ENCODE measurements at regions of chr14 and their contacts with region 1.

Region 1: DNA sequence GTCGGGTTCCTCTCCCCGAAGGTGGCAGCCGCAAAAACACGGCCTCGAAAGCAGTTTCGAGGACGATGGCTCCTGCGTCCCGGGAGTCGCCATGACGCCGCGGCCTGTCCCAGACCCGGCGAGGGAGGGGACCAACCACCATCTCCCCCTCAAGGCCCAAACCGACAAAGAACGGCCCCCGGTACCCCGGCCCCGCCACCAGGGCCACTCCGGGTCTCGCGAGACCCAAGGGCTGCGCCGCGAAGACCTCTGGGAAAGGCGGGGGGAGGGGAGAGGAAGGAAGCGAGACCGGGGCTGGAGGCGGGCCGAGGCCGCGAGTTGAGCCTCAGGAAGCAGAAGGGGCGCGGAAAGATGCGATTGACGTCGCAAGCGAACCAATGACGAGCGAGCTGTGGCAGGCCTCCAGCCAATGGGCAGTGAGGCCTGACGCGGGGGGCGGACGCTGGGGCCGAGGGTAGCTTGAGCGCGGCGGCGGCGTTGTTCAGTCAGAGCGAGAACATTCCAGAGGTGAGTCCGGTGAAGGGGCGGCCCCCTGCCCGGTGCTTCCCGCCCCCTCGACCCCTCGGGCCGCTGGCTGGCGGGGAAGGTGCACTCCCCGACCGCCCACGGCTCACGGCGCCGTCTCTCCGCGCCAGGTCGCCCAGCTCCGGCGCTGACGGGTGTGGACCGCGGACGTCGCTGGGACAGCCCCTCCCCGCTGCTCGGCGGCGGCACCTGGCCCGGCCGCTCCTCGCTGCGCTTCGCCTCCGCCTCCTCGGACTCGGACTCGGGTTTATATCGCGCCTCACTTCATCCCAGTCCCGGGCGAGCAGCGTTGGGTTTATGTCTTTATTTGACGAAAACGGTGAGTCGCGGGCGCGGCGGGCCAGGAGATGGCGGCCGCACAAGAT is at the start of gene EIF5:
- DNase-seq: peak; percentile 92 to 99 (median 99)
- ATAC-seq: peak; percentile 91
- H3K4me3 ChIP-seq: peak within 1 kb of the TSS; percentile 81
- H3K4me3 Mint-ChIP-seq: peak within 1 kb of the TSS; percentile 92 to 97 (median 96)
- H3K27ac ChIP-seq: peak within 1 kb of the TSS; percentile 99
- H3K27ac Mint-ChIP-seq: peak within 1 kb of the TSS; percentile 94 to 99 (median 98)
- H3K4me1 ChIP-seq: peaks cover 22 to 29% of the 10 kb centered on the region in 2 donors
- H3K4me1 Mint-ChIP-seq: peaks cover 23 to 61% (median 50%) of the 10 kb centered on the region in 7 donors
- H3K27me3 ChIP-seq: no peaks in the 10 kb centered on the region
- H3K27me3 Mint-ChIP-seq: peaks cover 0 to 4% (median 0%) of the 10 kb centered on the region in 5 donors
- total RNA-seq, gene EIF5: 182 to 716 (median 322) TPM

Region 2: GRCh38 chr14:102362545-102363181 is 971.3 kb before region 1 on chr14 and contains the starts of genes CINP and TECPR2:
- CTCF ChIA-PET with region 1: no interaction called
- POLR2A ChIA-PET with region 1: no interaction called
- intact Hi-C with region 1: loop called (anchors 1 to 5 kb)
- DNase-seq: peak; percentile 88 to 95 (median 92)
- ATAC-seq: peak; percentile 97
- H3K4me3 ChIP-seq: peak within 1 kb of the TSS; percentile 96
- H3K4me3 Mint-ChIP-seq: peak within 1 kb of the TSS in 6 of 10 donors; percentile 92 to 97 (median 95)
- H3K27ac ChIP-seq: peak within 1 kb of the TSS; percentile 87
- H3K27ac Mint-ChIP-seq: peak within 1 kb of the TSS; percentile 82 to 99 (median 96)
- H3K4me1 ChIP-seq: peaks cover 6 to 15% of the 10 kb centered on the region in 2 donors
- H3K4me1 Mint-ChIP-seq: peaks cover 17 to 42% (median 36%) of the 10 kb centered on the region in 7 donors
- H3K27me3 ChIP-seq: no peaks in the 10 kb centered on the region
- H3K27me3 Mint-ChIP-seq: no peaks in the 10 kb centered on the region
- total RNA-seq, gene CINP: 16.8 to 34.4 (median 31.8) TPM
- total RNA-seq, gene TECPR2: 8.7 to 12.9 (median 11.4) TPM

Region 3: GRCh38 chr14:103207388-103208072 is 126.5 kb before region 1 on chr14:
- CTCF ChIA-PET with region 1: no interaction called
- POLR2A ChIA-PET with region 1: no interaction called
- intact Hi-C with region 1: no loop called
- DNase-seq: no peak
- ATAC-seq: no peak
- H3K4me3 ChIP-seq: no peak overlapping the region
- H3K4me3 Mint-ChIP-seq: peak overlapping the region in 2 of 10 donors; percentile 17 to 57
- H3K27ac ChIP-seq: no peak overlapping the region
- H3K27ac Mint-ChIP-seq: no peak overlapping the region
- H3K4me1 ChIP-seq: no peaks in the 10 kb centered on the region
- H3K4me1 Mint-ChIP-seq: peaks cover 0 to 6% (median 0%) of the 10 kb centered on the region in 7 donors
- H3K27me3 ChIP-seq: no peaks in the 10 kb centered on the region
- H3K27me3 Mint-ChIP-seq: peaks cover 34 to 58% (median 45%) of the 10 kb centered on the region in 5 donors

Region 4: DNA sequence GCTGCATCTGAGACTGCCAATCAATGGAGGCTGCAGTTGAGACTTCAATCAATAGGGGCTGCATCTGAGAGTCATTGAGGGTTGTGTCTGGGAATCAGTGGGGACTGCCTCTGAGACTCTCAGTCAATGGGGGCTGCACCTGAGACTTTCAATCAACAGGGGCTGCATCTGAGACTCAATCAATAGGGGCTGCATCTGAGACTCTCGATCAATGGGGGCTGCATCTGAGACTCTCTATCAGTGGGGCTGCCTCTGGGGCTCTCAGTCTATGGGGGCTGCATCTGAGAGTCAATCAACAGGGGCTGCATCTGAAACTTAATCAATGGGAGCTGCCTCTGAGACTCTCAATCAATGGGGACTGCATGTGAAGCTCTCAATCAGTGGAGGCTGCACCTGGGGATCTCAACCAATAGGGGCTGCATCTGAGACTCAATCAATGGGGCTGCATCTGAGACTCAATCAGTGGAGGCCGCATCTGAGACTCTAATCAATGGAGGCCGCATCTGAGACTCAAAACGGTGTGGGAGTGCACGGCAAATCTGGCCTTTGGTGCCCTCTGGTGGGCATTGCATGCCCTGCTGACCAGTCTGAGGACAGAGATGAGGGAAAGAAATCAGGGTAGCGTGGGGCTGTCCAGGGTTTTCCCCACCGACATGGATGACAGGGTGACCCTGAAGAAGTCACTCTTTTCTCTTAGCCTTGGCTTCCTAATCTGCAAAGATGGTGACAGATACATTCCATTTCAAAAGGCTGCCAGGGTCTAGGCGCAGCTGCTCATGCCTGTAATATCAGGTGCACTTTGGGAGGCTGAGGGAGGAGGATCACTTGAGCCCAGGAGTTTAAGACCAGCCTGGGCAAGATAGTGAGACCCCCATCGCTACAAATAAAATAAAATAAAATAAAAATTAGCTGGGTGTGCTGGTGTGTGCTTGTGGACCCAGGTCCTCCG is 41.3 kb before region 1 on chr14:
- CTCF ChIA-PET with region 1: no interaction called
- POLR2A ChIA-PET with region 1: interaction called, 4 read pairs
- intact Hi-C with region 1: loop called in 1 of 2 experiments (anchors 1 kb)
- DNase-seq: peak; percentile 34 to 77 (median 56)
- ATAC-seq: peak; percentile 92
- H3K4me3 ChIP-seq: no peak overlapping the region
- H3K4me3 Mint-ChIP-seq: no peak overlapping the region
- H3K27ac ChIP-seq: no peak overlapping the region
- H3K27ac Mint-ChIP-seq: no peak overlapping the region
- H3K4me1 ChIP-seq: no peaks in the 10 kb centered on the region
- H3K4me1 Mint-ChIP-seq: peaks cover 0 to 7% (median 0%) of the 10 kb centered on the region in 7 donors
- H3K27me3 ChIP-seq: no peaks in the 10 kb centered on the region
- H3K27me3 Mint-ChIP-seq: peaks cover 10 to 27% (median 20%) of the 10 kb centered on the region in 5 donors

Region 5: GRCh38 chr14:103372603-103373304 is 38.8 kb after region 1 on chr14:
- CTCF ChIA-PET with region 1: no interaction called
- POLR2A ChIA-PET with region 1: no interaction called
- intact Hi-C with region 1: no loop called
- DNase-seq: no peak
- ATAC-seq: peak; percentile 77
- H3K4me3 ChIP-seq: no peak overlapping the region
- H3K4me3 Mint-ChIP-seq: no peak overlapping the region
- H3K27ac ChIP-seq: no peak overlapping the region
- H3K27ac Mint-ChIP-seq: no peak overlapping the region
- H3K4me1 ChIP-seq: no peaks in the 10 kb centered on the region
- H3K4me1 Mint-ChIP-seq: no peaks in the 10 kb centered on the region
- H3K27me3 ChIP-seq: no peaks in the 10 kb centered on the region
- H3K27me3 Mint-ChIP-seq: peaks cover 0 to 15% (median 9%) of the 10 kb centered on the region in 5 donors

Region 6: GRCh38 chr14:103391048-103391447 is 57.0 kb after region 1 on chr14:
- CTCF ChIA-PET with region 1: interaction called, 7 read pairs
- POLR2A ChIA-PET with region 1: interaction called, 18 read pairs
- intact Hi-C with region 1: loop called (anchors 1 to 2 kb)
- DNase-seq: peak in 7 of 9 donors; percentile 31 to 60 (median 48)
- ATAC-seq: peak; percentile 86
- H3K4me3 ChIP-seq: no peak overlapping the region
- H3K4me3 Mint-ChIP-seq: peak overlapping the region in 6 of 10 donors; percentile 17 to 54 (median 44)
- H3K27ac ChIP-seq: no peak overlapping the region
- H3K27ac Mint-ChIP-seq: peak overlapping the region in 6 of 9 donors; percentile 18 to 86 (median 73)
- H3K4me1 ChIP-seq: peaks cover 51% of the 10 kb centered on the region in 2 donors
- H3K4me1 Mint-ChIP-seq: peaks cover 33 to 86% (median 60%) of the 10 kb centered on the region in 7 donors
- H3K27me3 ChIP-seq: no peaks in the 10 kb centered on the region
- H3K27me3 Mint-ChIP-seq: no peaks in the 10 kb centered on the region

Region 7: DNA sequence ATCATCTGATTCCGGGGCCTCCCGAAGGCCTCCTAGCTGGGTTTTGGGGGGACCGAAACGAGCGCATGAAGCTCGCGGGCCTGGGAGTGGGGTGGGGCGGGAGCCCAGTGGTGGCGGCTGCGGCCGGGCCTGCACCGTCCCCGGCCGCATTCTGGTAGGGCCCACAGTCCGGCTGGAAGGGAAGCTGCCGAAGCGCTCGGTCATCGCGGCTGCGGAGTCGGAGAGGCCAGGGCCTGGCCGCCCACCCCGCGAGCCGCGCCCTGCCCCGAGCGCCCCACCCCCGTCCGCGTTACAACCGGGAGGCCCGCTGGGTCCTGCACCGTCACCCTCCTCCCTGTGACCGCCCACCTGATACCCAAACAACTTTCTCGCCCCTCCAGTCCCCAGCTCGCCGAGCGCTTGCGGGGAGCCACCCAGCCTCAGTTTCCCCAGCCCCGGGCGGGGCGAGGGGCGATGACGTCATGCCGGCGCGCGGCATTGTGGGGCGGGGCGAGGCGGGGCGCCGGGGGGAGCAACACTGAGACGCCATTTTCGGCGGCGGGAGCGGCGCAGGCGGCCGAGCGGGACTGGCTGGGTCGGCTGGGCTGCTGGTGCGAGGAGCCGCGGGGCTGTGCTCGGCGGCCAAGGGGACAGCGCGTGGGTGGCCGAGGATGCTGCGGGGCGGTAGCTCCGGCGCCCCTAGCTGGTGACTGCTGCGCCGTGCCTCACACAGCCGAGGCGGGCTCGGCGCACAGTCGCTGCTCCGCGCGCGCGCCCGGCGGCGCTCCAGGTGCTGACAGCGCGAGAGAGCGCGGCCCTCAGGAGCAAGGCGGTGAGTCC is 294.9 kb after region 1 on chr14 and contains the start of gene KLC1:
- CTCF ChIA-PET with region 1: no interaction called
- POLR2A ChIA-PET with region 1: interaction called, 3 read pairs
- intact Hi-C with region 1: loop called in 1 of 2 experiments (anchors 1 kb)
- DNase-seq: peak; percentile 71 to 93 (median 84)
- ATAC-seq: peak; percentile 87
- H3K4me3 ChIP-seq: peak within 1 kb of the TSS; percentile 78
- H3K4me3 Mint-ChIP-seq: peak within 1 kb of the TSS; percentile 74 to 91 (median 88)
- H3K27ac ChIP-seq: peak within 1 kb of the TSS; percentile 98
- H3K27ac Mint-ChIP-seq: peak within 1 kb of the TSS; percentile 60 to 93 (median 88)
- H3K4me1 ChIP-seq: peaks cover 18 to 29% of the 10 kb centered on the region in 2 donors
- H3K4me1 Mint-ChIP-seq: peaks cover 23 to 64% (median 38%) of the 10 kb centered on the region in 7 donors
- H3K27me3 ChIP-seq: no peaks in the 10 kb centered on the region
- H3K27me3 Mint-ChIP-seq: no peaks in the 10 kb centered on the region
- total RNA-seq, gene KLC1: 150 to 268 (median 174) TPM